CD4-positive, alpha-beta T cell (primary cell): ENCODE measurements at regions of chr6 and their contacts with region 1.

Region 1: DNA sequence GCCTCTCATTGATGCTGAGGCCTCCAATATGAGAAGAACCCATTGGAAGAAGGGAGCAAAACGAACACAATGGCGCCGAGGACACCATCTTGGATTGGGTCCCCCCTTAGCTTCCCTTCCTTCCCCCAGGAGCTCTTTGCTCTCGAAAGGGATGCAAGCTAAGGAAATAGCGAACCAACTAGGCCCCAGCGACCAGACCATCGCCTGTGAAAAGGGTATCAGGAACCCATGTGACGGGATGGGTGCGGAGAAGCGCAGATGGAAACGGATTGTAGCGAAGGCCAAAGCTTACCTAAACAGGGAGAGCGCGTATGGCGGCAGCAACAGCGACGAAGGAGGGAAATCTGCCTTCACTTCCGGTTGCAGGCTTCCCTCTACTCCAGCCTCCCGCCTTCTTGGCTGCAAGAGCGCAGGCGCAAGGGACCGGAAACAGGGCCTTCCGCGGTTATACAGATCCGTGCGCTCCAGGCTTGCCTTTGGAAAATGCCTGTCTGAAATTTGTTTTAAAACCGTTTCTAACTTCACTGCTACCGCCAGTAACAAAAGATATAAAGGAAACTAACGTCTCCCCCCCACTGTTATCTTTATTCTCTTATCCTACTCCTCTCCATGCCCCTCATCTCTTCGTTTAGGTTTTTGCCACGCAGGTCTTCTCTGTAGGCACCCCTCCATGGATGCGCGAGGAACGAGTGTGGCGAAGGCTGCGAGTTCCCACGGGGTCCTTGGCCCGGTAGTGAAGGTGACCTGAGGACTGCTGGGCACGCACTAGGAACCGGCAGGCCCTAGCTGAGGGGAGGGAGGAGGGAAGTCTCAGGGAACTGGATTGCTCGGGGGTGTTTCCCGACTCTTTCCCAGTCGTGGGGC is at the start of gene DDX39B:
- DNase-seq: peak; percentile 87 to 99 (median 92)
- ATAC-seq: peak; percentile 71
- H3K4me3 ChIP-seq: peak within 1 kb of the TSS; percentile 91
- H3K4me3 Mint-ChIP-seq: peak within 1 kb of the TSS; percentile 96
- H3K27ac ChIP-seq: peak within 1 kb of the TSS; percentile 94 to 95
- H3K27ac Mint-ChIP-seq: peak within 1 kb of the TSS; percentile 99
- H3K4me1 ChIP-seq: peaks cover 53% of the 10 kb centered on the region
- H3K4me1 Mint-ChIP-seq: peaks cover 56% of the 10 kb centered on the region
- H3K27me3 ChIP-seq: no peaks in the 10 kb centered on the region
- H3K27me3 Mint-ChIP-seq: no peaks in the 10 kb centered on the region
- CTCF ChIP-seq: no peak
- total RNA-seq, gene DDX39B: 483 to 498 TPM

Region 2: GRCh38 chr6:31403283-31403989 is 138.5 kb before region 1 on chr6 and contains the start of gene MICA:
- CTCF ChIA-PET with region 1: no interaction called
- POLR2A ChIA-PET with region 1: interaction called, 14 read pairs
- intact Hi-C with region 1: no loop called
- DNase-seq: peak; percentile 25 to 82 (median 54)
- ATAC-seq: peak; percentile 38
- H3K4me3 ChIP-seq: peak within 1 kb of the TSS; percentile 76
- H3K4me3 Mint-ChIP-seq: peak within 1 kb of the TSS; percentile 92
- H3K27ac ChIP-seq: peak within 1 kb of the TSS; percentile 33 to 50
- H3K27ac Mint-ChIP-seq: peak within 1 kb of the TSS; percentile 81
- H3K4me1 ChIP-seq: peaks cover 51% of the 10 kb centered on the region
- H3K4me1 Mint-ChIP-seq: peaks cover 75% of the 10 kb centered on the region
- H3K27me3 ChIP-seq: no peaks in the 10 kb centered on the region
- H3K27me3 Mint-ChIP-seq: no peaks in the 10 kb centered on the region
- CTCF ChIP-seq: no peak
- total RNA-seq, gene MICA: 10.6 to 14.0 TPM

Region 3: DNA sequence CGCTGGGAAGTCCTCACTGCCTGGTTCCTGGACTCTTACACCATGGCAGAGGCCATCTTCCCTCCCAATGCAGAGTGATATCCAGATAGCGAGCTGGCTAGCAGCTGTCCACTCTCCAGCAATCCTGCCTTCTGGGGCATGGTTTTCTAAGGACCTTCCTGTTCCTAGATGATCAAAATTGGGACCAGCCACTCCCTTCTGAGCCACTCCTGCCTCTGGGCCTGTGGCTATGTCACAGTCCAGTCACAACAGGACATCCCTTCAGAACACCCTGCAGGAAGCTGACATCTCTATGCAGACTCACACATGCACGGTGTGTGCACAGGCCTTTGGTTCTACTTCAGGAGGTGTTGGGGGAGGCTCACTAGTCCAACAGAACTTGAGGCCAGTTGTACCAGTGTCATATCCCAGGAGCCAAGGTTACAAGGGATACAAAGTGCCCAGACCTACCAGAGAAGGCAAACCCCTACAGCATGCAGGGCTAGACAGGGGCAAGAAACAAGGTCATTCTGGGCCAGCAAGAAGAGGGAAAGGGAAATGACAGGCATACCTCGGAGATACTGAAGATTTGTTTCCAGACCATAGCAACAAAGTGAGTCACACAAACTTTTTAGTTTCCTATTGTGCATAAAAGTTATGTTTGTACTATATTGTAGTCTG is 15.8 kb before region 1 on chr6:
- CTCF ChIA-PET with region 1: interaction called, 6 read pairs
- POLR2A ChIA-PET with region 1: interaction called, 14 read pairs
- intact Hi-C with region 1: no loop called
- DNase-seq: no peak
- ATAC-seq: no peak
- H3K4me3 ChIP-seq: no peak overlapping the region
- H3K4me3 Mint-ChIP-seq: no peak overlapping the region
- H3K27ac ChIP-seq: no peak overlapping the region
- H3K27ac Mint-ChIP-seq: no peak overlapping the region
- H3K4me1 ChIP-seq: no peaks in the 10 kb centered on the region
- H3K4me1 Mint-ChIP-seq: no peaks in the 10 kb centered on the region
- H3K27me3 ChIP-seq: no peaks in the 10 kb centered on the region
- H3K27me3 Mint-ChIP-seq: no peaks in the 10 kb centered on the region
- CTCF ChIP-seq: no peak

Region 4: GRCh38 chr6:31580807-31581433 is 39.0 kb after region 1 on chr6:
- CTCF ChIA-PET with region 1: interaction called, 169 read pairs
- POLR2A ChIA-PET with region 1: interaction called, 220 read pairs
- intact Hi-C with region 1: loop called (anchors 1 kb)
- DNase-seq: peak; percentile 77 to 93 (median 90)
- ATAC-seq: peak; percentile 66
- H3K4me3 ChIP-seq: peak overlapping the region; percentile 97
- H3K4me3 Mint-ChIP-seq: peak overlapping the region; percentile 97
- H3K27ac ChIP-seq: peak overlapping the region; percentile 82 to 95
- H3K27ac Mint-ChIP-seq: peak overlapping the region; percentile 85
- H3K4me1 ChIP-seq: peaks cover 82% of the 10 kb centered on the region
- H3K4me1 Mint-ChIP-seq: peaks cover 84% of the 10 kb centered on the region
- H3K27me3 ChIP-seq: no peaks in the 10 kb centered on the region
- H3K27me3 Mint-ChIP-seq: no peaks in the 10 kb centered on the region
- CTCF ChIP-seq: peak; percentile 98

Region 5: GRCh38 chr6:31619805-31620585 is 78.1 kb after region 1 on chr6:
- CTCF ChIA-PET with region 1: no interaction called
- POLR2A ChIA-PET with region 1: interaction called, 22 read pairs
- intact Hi-C with region 1: loop called in 1 of 2 experiments (anchors 2 kb)
- DNase-seq: peak; percentile 86 to 99 (median 95)
- ATAC-seq: peak; percentile 79
- H3K4me3 ChIP-seq: peak overlapping the region; percentile 74
- H3K4me3 Mint-ChIP-seq: peak overlapping the region; percentile 92
- H3K27ac ChIP-seq: peak overlapping the region; percentile 97 to 99
- H3K27ac Mint-ChIP-seq: peak overlapping the region; percentile 92
- H3K4me1 ChIP-seq: peaks cover 46% of the 10 kb centered on the region
- H3K4me1 Mint-ChIP-seq: peaks cover 52% of the 10 kb centered on the region
- H3K27me3 ChIP-seq: no peaks in the 10 kb centered on the region
- H3K27me3 Mint-ChIP-seq: no peaks in the 10 kb centered on the region
- CTCF ChIP-seq: no peak

Region 6: DNA sequence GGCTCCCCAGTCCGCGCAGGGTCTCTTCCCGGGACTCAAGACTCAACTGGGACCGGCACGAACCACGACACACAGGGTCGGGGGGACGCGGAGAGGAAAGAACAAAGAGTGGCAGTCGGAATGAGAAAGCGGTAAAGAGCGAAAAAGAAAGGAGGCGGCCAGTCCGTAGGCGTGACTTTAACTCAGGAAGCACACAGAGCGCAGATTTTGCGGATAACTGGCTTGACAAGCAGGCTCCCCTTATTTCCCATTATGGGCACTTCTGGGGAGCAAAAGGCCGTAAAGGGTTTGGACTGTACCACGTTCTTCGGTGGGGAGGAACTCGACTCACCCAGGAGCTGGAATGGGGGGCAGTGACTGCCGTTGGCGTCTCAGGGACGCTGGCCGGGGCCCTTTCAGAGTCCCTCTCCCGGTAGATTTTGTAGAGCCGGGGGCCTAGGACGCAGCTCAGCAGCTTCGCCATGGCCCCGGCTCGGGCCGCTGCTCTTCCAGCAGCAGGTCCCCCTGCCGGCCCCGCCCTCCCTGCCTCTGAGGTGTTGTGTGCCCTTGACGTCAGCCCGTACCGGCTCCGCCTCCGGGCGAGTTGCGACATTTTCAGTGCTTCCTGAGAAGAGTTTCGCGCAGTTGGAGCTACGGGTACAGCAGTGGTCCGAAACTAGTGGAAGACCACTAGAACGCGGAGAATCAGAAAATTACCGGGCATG is 161.1 kb after region 1 on chr6 and contains the start of gene ABHD16A:
- CTCF ChIA-PET with region 1: no interaction called
- POLR2A ChIA-PET with region 1: interaction called, 10 read pairs
- intact Hi-C with region 1: no loop called
- DNase-seq: peak; percentile 94 to 99 (median 97)
- ATAC-seq: peak; percentile 91
- H3K4me3 ChIP-seq: peak within 1 kb of the TSS; percentile 67
- H3K4me3 Mint-ChIP-seq: peak within 1 kb of the TSS; percentile 94
- H3K27ac ChIP-seq: peak within 1 kb of the TSS; percentile 95 to 98
- H3K27ac Mint-ChIP-seq: peak within 1 kb of the TSS; percentile 94
- H3K4me1 ChIP-seq: peaks cover 35% of the 10 kb centered on the region
- H3K4me1 Mint-ChIP-seq: peaks cover 33% of the 10 kb centered on the region
- H3K27me3 ChIP-seq: no peaks in the 10 kb centered on the region
- H3K27me3 Mint-ChIP-seq: no peaks in the 10 kb centered on the region
- CTCF ChIP-seq: no peak
- total RNA-seq, gene ABHD16A: 52.3 to 59.3 TPM

Region 7: DNA sequence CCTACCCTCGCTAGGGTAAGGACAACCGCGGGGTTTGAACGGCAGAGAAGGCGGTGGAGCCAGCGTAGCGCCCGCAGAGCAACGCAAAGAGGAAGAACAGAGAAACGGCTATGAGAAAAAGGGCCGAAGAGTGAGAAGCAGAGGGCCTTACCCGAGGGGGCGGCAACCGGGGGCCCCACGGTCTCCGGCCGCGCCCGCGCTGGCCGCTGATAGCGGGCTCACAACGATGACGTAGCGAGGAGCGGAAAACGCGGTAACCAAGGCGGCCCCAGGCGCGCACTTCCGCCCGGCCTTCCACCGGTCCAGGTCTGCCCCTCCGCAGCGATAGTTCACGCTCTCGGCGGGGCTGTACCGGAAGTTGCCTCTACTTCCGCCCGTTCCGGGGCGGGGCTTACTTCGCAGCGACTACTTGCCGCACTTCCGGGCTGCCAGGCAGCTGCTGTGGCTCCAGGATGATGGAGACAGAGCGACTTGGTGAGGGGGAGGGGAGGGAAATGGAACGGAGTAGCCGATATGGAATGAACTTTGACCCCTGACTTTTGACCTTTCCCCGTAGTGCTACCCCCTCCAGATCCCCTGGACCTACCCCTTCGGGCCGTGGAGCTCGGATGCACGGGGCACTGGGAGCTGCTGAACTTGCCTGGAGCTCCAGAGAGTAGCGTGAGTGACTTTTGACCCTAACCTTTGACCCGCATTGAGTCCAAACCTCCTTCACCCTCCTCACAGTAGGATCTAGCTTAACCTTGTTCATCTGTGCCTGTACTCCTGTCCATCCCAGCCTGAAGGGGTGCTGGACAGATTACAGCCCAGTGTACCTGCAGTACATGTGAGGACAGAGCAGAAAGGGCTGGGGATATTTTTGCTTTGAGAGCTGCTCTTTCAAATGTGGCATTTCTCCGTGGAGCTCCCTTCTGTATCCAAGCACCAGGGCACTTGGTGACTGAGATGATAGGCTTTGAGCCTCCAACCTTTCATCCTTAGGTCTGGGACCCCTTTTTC is 417.1 kb after region 1 on chr6 and contains the starts of genes NELFE and SKIC2:
- CTCF ChIA-PET with region 1: no interaction called
- POLR2A ChIA-PET with region 1: interaction called, 3 read pairs
- intact Hi-C with region 1: loop called in 1 of 2 experiments (anchors 5 kb)
- DNase-seq: peak; percentile 96 to 100 (median 98)
- ATAC-seq: peak; percentile 97
- H3K4me3 ChIP-seq: peak within 1 kb of the TSS; percentile 97
- H3K4me3 Mint-ChIP-seq: peak within 1 kb of the TSS; percentile 96
- H3K27ac ChIP-seq: peak within 1 kb of the TSS; percentile 94 to 96
- H3K27ac Mint-ChIP-seq: peak within 1 kb of the TSS; percentile 97
- H3K4me1 ChIP-seq: peaks cover 30% of the 10 kb centered on the region
- H3K4me1 Mint-ChIP-seq: peaks cover 38% of the 10 kb centered on the region
- H3K27me3 ChIP-seq: no peaks in the 10 kb centered on the region
- H3K27me3 Mint-ChIP-seq: no peaks in the 10 kb centered on the region
- CTCF ChIP-seq: no peak
- total RNA-seq, gene NELFE: 53.8 to 58.2 TPM
- total RNA-seq, gene SKIC2: 133 to 141 TPM